ENCODE measurements at regions of chr20 and their contacts with region 1.

Region 1: DNA sequence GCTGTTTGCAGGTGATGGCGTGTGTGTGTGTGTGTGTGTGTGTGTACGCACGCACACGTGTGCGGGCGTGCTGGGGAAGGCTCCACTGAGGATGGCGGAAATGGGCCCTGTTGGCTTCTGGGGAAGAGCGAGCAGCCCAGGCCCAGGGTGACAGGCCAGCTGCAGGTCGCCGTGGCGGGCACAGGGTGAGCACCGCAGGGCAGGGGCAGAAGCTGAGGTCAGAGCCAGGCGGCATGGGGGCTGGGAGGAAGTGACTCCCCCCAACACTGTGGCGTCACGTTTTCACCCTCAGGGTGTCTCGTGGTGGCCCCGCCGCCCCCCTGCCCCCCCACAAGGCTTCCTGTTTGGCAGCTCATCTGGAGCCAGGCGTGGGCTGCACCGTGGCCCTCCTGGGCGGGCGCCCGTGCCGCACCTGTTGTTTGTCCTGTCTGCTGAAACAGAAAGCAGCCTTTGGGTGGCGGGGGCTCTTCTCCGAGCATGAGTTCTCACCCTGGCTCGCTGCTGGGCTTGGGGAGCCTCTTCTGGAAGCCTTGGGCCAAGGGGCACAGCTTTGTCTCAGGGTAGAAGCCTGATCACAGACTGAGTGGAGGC is 7.1 kb downstream of the RBM38 start:
- DNase-seq: peak; percentile 85

Region 2: DNA sequence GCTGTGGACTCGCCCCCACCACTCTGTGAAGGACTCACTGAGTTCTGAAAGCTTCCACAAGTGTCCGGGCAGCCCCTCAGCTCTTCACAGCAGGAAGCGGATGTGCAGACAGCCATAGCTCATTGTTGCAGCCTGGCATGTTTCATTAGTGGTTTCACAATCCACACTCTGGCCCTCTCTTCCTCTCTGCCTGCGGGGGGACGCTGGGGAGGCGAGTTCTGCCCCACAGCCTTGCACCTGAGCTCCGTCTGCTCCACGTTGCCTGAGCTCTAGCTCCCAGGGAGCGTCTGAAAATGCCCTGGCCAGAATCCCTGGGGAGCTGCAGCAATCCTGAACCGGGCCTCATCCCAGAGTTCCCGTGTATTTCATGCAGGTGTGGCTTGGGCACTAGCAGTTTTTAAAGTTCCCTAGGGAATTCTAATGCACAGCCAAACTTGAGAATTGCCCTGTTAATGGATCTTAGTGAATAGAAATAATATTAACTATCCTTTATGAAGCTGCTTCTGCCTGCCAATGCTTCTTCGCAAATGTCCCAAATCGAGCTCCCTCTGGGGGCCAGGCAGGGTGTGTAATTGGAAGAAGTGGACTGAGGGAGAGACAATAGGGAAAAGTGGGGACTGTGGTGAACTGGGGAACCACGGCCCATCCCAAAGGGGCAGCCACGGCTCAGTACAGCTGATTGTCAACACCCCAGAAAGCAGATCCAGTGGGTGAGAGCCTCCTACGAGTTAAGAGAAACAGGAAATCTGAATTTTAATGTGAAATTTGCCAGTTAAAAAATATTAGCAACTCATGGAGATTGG is 75.1 kb after region 1 on chr20:
- intact Hi-C with region 1: loop called in 1 of 2 experiments (anchors 10 kb)
- DNase-seq: peak; percentile 79

Region 3: GRCh38 chr20:58407966-58408557 is 1009.7 kb after region 1 on chr20:
- intact Hi-C with region 1: loop called in 1 of 2 experiments (anchors 5 kb)
- DNase-seq: no peak

Region 4: DNA sequence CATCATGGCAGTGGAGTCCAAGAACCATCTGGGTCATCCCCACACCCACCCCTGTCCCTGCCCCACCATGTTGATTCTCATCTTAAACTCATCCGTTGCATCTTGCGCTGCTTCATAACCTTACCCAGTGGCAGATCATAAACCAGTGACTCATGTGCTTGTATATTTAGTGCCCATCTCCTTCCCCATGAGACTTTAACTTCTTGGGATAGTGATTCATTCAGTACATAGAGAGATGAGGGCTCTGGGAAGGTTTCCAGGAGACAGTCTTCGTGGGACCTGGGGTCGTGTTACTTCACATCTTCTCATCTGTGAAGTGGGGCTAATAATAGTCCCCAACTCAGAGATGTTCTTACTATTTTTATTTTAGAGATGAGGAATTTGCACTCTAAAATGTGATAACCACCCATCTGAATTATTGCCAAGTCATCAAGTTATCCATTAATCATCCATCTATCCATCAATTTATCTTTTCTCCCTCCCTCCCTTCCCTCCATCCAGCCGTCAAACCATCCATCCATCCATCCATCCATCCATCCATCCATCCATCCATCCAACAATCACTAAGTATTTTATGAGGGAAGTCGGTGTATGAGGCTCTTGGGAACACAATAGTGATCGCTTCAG is 1953.2 kb after region 1 on chr20:
- intact Hi-C with region 1: no loop called
- DNase-seq: no peak

Measured in posterior vena cava (tissue), 2 donors.